WTC11 (cell line): ENCODE measurements at regions of chr6 and their contacts with region 1.

Region 1: DNA sequence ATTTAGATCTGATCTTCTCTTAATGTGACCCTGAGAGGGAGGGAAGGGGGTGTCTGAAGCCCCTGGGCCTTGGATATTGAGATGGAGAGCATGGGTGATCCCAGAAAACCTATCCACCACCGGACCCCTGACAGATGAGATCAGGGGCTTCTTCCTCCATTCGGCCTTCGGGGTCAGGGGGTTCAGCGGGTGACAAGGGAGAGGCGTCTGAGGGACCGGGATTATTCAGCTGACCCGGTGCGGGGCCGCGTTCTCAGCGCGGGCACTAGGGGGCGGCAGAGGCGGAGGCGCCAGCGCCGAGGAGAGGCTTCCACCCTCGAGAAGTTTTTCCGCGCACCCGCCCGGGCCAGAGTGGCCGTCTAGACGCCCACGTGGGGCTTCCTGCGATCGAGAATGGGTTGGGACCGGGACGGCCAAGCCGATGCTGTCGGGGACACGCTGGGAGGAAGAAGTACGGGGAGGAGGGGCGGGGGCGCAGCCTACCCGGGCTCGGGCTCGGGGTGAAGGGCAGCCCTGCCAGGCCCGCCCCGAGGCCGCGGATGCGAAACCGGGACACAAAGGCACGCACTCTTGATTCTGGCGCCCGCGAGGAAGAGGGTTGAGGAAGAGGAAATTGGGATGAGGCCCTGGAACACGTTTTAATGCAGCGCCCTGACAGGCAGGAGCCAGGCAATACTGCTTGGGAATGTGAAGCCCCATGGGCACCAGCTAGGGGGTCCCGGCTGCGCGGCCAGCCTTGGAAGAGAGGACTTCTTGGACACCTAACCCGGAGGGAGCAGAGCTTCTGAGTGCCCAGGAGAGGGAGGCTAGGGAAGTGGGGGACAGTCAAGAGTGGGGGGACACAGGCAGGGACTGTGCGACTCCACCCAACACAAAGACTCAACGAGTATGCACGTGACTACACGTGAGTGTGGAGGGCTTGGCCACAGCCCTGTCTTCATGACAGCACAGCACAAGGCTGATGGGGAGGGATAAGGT is 30.6 kb downstream of the COL11A2 start:
- DNase-seq: peak; percentile 86
- ATAC-seq: peak; percentile 83
- H3K4me3 Mint-ChIP-seq: peak overlapping the region; percentile 86
- H3K27ac Mint-ChIP-seq: no peak overlapping the region
- H3K4me1 Mint-ChIP-seq: peaks cover 22% of the 10 kb centered on the region
- H3K27me3 Mint-ChIP-seq: peaks cover 25% of the 10 kb centered on the region
- CTCF ChIP-seq: peak; percentile 86

Region 2: DNA sequence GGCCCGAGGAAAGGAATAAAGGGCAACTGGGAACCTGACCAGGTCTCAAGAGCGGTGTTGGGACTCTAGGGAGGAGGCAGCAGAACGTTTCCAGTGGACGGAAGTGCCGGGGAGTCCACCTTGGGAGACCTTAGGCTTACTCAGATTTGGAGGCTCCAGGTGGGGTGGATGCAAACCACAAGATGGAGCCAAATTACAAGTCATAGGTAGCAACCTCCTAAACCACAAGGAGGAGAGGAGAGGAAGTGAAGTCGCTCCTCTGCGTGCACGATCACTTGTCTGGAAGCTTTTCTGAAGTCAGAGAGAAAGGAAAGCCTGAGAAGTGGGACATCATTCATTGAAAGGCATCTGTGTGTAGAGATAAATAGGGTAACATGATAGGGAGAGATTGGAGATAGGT is 161.6 kb before region 1 on chr6:
- CTCF ChIA-PET with region 1: interaction called, 10 read pairs
- POLR2A ChIA-PET with region 1: no interaction called
- DNase-seq: peak; percentile 67
- ATAC-seq: peak; percentile 98
- H3K4me3 Mint-ChIP-seq: no peak overlapping the region
- H3K27ac Mint-ChIP-seq: no peak overlapping the region
- H3K4me1 Mint-ChIP-seq: peaks cover 4% of the 10 kb centered on the region
- H3K27me3 Mint-ChIP-seq: peaks cover 2% of the 10 kb centered on the region; the same call in 1 of the 2 replicates
- CTCF ChIP-seq: peak; percentile 21; the same call in 1 of the 2 replicates

Region 3: GRCh38 chr6:33118525-33119123 is 43.0 kb before region 1 on chr6:
- CTCF ChIA-PET with region 1: interaction called, 36 read pairs
- POLR2A ChIA-PET with region 1: no interaction called
- DNase-seq: no peak
- ATAC-seq: no peak
- H3K4me3 Mint-ChIP-seq: peak overlapping the region; percentile 98
- H3K27ac Mint-ChIP-seq: peak overlapping the region; percentile 100
- H3K4me1 Mint-ChIP-seq: peaks cover 76% of the 10 kb centered on the region
- H3K27me3 Mint-ChIP-seq: peaks cover 2% of the 10 kb centered on the region; the same call in 1 of the 2 replicates
- CTCF ChIP-seq: peak; percentile 89

Region 4: GRCh38 chr6:33147807-33148666 is 13.6 kb before region 1 on chr6:
- CTCF ChIA-PET with region 1: interaction called, 16 read pairs
- POLR2A ChIA-PET with region 1: no interaction called
- DNase-seq: no peak
- ATAC-seq: no peak
- H3K4me3 Mint-ChIP-seq: no peak overlapping the region
- H3K27ac Mint-ChIP-seq: no peak overlapping the region; the same call in 1 of the 2 replicates
- H3K4me1 Mint-ChIP-seq: peaks cover 23% of the 10 kb centered on the region
- H3K27me3 Mint-ChIP-seq: peaks cover 9% of the 10 kb centered on the region
- CTCF ChIP-seq: peak; percentile 59; the same call in 1 of the 2 replicates

Region 5: GRCh38 chr6:33172688-33173534 is 11.3 kb after region 1 on chr6:
- CTCF ChIA-PET with region 1: interaction called, 55 read pairs
- POLR2A ChIA-PET with region 1: no interaction called
- DNase-seq: peak; percentile 71
- ATAC-seq: peak; percentile 79
- H3K4me3 Mint-ChIP-seq: no peak overlapping the region
- H3K27ac Mint-ChIP-seq: no peak overlapping the region; the same call in 1 of the 2 replicates
- H3K4me1 Mint-ChIP-seq: 0 out of 2 replicates have a peak, but pooled peaks cover 3% of the 10 kb centered on the region
- H3K27me3 Mint-ChIP-seq: peaks cover 7% of the 10 kb centered on the region; the same call in 1 of the 2 replicates
- CTCF ChIP-seq: peak; percentile 51

Region 6: GRCh38 chr6:33200219-33201146 is 38.8 kb after region 1 on chr6 and contains the starts of genes RXRB and SLC39A7:
- CTCF ChIA-PET with region 1: interaction called, 12 read pairs
- POLR2A ChIA-PET with region 1: no interaction called
- DNase-seq: peak; percentile 99
- ATAC-seq: peak; percentile 58
- H3K4me3 Mint-ChIP-seq: peak within 1 kb of the TSS; percentile 97
- H3K27ac Mint-ChIP-seq: peak within 1 kb of the TSS; percentile 99
- H3K4me1 Mint-ChIP-seq: peaks cover 54% of the 10 kb centered on the region
- H3K27me3 Mint-ChIP-seq: peaks cover 4% of the 10 kb centered on the region
- CTCF ChIP-seq: no peak
- total RNA-seq, gene RXRB: 21.5 to 24.5 TPM (median 23.3 TPM) in 3 replicates
- total RNA-seq, gene SLC39A7: 131 to 163 TPM (median 134 TPM) in 3 replicates